ENCODE measurements at regions of chr12 and their contacts with region 1.

Region 1: DNA sequence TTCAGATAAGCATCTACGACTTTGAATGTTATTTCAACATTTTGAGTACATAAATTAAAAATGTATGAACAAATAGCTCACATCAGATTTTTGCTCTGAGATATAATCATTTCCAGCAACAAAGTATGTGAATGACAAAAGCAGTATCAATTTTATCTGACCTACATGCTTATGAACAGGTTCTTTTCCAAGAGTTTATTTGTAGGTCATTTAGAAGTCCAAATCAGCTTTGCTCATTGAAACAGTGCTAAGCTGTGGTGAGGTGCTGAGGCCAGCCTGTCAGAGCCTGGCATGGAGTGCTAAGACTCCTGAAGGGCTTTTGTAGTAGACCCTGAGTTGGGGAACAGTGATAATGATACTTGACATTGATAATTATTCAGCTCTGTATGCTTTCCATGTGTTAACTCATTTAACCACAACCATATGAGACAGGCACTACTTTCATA is 205.0 kb upstream of the DCN start:
- DNase-seq: no peak
- H3K4me3 Mint-ChIP-seq: no peak overlapping the region
- H3K27ac Mint-ChIP-seq: no peak overlapping the region
- H3K4me1 Mint-ChIP-seq: peaks cover 16% of the 10 kb centered on the region
- H3K27me3 Mint-ChIP-seq: no peaks in the 10 kb centered on the region
- CTCF ChIP-seq: no peak

Region 2: GRCh38 chr12:91127751-91128150 is 259.9 kb before region 1 on chr12:
- CTCF ChIA-PET with region 1: no interaction called
- intact Hi-C with region 1: no loop called
- DNase-seq: no peak
- H3K4me3 Mint-ChIP-seq: no peak overlapping the region
- H3K27ac Mint-ChIP-seq: no peak overlapping the region
- H3K4me1 Mint-ChIP-seq: peaks cover 8% of the 10 kb centered on the region
- H3K27me3 Mint-ChIP-seq: no peaks in the 10 kb centered on the region
- CTCF ChIP-seq: no peak

Region 3: DNA sequence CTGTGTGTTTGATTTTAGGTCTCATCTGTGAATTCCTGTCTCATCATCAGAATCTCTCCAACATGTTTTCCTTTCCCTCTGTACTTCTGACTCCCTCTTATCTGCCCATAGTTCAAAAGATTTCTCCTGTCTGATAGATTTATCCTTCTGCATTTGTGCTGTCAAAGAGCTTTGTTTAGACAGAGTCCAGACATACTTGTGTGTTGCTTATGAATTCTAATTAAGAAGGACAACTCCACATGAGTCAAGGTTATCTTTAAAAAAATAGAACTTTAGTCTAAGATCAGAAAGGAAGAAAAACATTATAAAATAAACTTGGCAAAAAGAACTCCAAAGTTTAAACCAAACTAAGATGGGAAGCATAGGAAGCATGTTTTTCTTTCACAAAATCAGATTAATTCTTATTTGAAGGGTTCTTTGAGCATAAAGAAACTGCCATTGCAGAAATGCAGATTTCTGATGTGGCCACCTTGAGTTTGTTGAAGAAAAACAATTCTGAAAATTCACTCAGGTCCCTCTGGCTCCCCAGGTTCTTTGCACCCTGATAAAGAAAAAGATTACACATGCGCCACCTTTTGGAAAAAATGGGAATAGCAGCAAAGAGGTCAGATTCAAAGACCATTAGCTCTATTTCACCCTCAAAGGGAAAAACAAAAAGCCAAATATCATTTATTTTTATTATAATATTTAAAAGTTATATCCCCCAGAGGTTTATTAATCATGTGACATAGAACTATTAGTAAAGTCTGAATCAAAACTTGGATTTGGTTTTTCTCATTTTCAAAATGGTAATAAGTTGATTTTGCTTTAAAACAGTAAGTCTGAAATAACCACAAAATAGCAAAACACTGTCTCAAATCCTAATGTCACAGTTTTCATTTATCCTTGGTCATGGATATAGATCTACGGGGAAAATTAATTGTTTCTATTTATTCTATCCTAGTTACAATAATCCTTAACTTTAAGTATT is 61.3 kb before region 1 on chr12:
- CTCF ChIA-PET with region 1: no interaction called
- intact Hi-C with region 1: no loop called
- DNase-seq: peak; percentile 70
- H3K4me3 Mint-ChIP-seq: no peak overlapping the region
- H3K27ac Mint-ChIP-seq: no peak overlapping the region
- H3K4me1 Mint-ChIP-seq: no peaks in the 10 kb centered on the region
- H3K27me3 Mint-ChIP-seq: no peaks in the 10 kb centered on the region
- CTCF ChIP-seq: peak; percentile 67

Region 4: GRCh38 chr12:92185052-92185451 is 797.4 kb after region 1 on chr12:
- CTCF ChIA-PET with region 1: no interaction called
- intact Hi-C with region 1: no loop called
- DNase-seq: no peak
- H3K4me3 Mint-ChIP-seq: no peak overlapping the region
- H3K27ac Mint-ChIP-seq: no peak overlapping the region
- H3K4me1 Mint-ChIP-seq: no peaks in the 10 kb centered on the region
- H3K27me3 Mint-ChIP-seq: no peaks in the 10 kb centered on the region
- CTCF ChIP-seq: no peak

Region 5: GRCh38 chr12:92424338-92424737 is 1036.7 kb after region 1 on chr12:
- CTCF ChIA-PET with region 1: interaction called, 13 read pairs
- intact Hi-C with region 1: no loop called
- DNase-seq: no peak
- H3K4me3 Mint-ChIP-seq: no peak overlapping the region
- H3K27ac Mint-ChIP-seq: no peak overlapping the region
- H3K4me1 Mint-ChIP-seq: peaks cover 37% of the 10 kb centered on the region
- H3K27me3 Mint-ChIP-seq: no peaks in the 10 kb centered on the region
- CTCF ChIP-seq: no peak

Measured in Calu3 (cell line).